ENCODE measurements at regions of chr1 and their contacts with region 1.

Region 1: DNA sequence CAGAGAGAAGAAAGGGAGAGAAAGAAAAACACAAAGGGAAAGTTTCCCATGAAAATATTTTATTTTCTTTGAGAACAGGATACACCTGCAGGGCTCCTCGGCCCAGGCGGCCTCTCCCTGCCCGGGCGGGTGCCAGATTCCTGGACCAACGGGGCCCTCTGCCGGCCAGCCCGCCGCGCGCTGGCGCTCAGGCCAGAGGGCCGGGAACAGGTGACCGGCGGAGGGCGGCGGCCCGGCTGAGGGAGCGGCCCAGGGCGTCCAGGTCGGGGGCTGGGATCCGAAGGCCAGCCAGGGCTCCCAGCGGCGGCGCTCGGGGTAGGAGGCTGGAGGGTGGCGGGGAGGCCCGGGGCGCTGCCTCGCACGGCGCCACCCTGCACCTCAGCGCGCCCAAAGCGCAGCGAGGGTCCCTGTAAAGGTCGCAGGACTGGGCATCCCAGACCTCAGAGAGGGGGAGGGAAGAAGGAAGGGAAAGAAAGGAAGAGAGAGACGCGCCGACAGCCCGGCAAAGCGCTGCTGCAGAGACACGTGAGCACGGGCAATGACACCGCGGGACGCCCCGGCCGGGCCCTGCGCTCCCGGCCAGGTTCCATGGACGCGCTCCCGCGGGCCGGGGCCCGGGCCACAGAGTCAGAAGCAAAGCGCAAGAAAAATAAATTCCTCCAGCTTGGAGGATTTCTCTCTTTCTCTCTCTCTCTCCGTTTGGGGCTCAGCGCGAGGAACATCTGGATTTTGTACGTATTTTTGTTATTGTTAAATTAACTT is 927 bp downstream of the WNT9A start:
- DNase-seq: peak; percentile 64

Region 2: GRCh38 chr1:227465256-227465655 is 481.5 kb before region 1 on chr1:
- in situ Hi-C with region 1: loop called (anchors 25 kb)
- DNase-seq: no peak

Region 3: GRCh38 chr1:227762233-227762911 is 184.4 kb before region 1 on chr1:
- in situ Hi-C with region 1: loop called (anchors 25 kb)
- DNase-seq: peak; percentile 82